IMR-90 (cell line): ENCODE measurements at regions of chr1 and their contacts with region 1.

Region 1: DNA sequence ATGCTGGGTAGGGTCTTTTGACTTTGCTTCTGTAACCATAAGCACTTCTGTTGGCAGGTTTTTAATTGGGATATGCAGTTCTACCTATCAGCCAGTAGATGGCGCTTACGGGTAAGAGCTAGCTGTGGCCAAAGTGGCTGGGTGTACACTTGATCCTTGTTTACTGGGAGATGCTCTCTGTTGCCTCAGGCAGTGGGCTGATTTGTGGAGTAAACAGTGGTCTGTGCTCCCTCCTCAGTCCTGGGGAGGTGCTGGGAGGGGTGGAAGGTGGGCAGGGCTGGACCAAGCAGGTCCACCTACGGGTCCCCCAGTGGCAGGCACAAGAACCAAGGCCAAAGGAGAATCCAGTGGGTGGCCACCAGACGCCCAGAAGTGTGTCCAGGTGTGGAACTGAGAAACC is 43.4 kb downstream of the RALGPS2 start:
- DNase-seq: no peak
- ATAC-seq: no peak
- H3K4me3 ChIP-seq: no peak overlapping the region
- H3K27ac ChIP-seq: no peak overlapping the region
- H3K4me1 ChIP-seq: peaks cover 2% of the 10 kb centered on the region; the same call in 1 of the 2 replicates
- H3K27me3 ChIP-seq: no peaks in the 10 kb centered on the region
- CTCF ChIP-seq: peak; percentile 52
- POLR2A ChIP-seq: no peak
- RAD21 ChIP-seq: peak; percentile 52

Region 2: GRCh38 chr1:178997428-178997827 is 229.0 kb after region 1 on chr1:
- CTCF ChIA-PET with region 1: no interaction called
- POLR2A ChIA-PET with region 1: no interaction called
- dilution Hi-C with region 1: no loop called
- in situ Hi-C with region 1: loop called (anchors 10 kb)
- intact Hi-C with region 1: no loop called
- DNase-seq: no peak
- ATAC-seq: no peak
- H3K4me3 ChIP-seq: no peak overlapping the region
- H3K27ac ChIP-seq: no peak overlapping the region
- H3K4me1 ChIP-seq: no peaks in the 10 kb centered on the region; the same call in 1 of the 2 replicates
- H3K27me3 ChIP-seq: no peaks in the 10 kb centered on the region
- CTCF ChIP-seq: no peak
- POLR2A ChIP-seq: no peak
- RAD21 ChIP-seq: no peak